ENCODE measurements at regions of chr5 and their contacts with region 1.

Region 1: DNA sequence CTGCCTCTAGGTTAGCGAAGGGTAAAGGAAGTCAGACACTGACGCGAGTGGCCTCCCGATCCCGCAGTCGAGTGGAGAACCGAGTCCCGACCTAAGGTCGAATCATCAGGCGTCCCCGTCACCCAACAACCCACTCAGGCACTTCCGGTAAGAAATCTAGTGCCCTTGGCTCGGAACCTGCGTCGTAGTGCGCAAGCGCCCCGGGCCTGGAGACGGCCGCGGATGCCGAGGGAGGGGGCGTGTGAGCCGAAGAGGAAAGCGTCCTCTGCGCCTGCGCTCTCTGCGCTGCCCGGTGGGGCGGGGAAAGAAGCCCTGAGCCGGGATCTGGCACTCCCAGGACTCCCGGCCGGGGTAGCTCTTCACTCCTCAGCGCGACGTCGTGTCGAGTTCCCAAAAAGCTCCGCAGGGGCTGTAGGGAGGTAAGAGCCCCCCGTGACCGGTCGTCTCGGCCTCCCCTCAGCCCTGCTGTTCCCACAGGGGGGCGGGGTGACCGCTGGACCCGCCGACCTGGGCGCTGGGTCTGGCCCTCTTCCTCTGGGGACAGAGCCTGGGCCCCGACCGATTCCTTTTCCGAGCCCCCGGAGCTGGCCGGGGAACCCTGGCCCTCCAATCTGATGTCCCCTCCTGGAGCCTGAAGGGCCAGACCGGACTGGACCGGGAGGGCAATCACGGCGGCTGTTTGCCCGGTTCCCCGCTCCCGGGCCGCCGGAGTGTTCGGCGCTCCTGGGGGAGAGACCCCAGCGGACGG is at the start of gene ZFYVE16:
- DNase-seq: peak; percentile 98
- ATAC-seq: peak; percentile 94
- H3K4me3 Mint-ChIP-seq: peak within 1 kb of the TSS; percentile 82
- H3K27ac Mint-ChIP-seq: peak within 1 kb of the TSS; percentile 94
- H3K4me1 Mint-ChIP-seq: peaks cover 17% of the 10 kb centered on the region
- H3K27me3 Mint-ChIP-seq: no peaks in the 10 kb centered on the region
- total RNA-seq, gene ZFYVE16: 11.2 to 11.8 TPM

Region 2: DNA sequence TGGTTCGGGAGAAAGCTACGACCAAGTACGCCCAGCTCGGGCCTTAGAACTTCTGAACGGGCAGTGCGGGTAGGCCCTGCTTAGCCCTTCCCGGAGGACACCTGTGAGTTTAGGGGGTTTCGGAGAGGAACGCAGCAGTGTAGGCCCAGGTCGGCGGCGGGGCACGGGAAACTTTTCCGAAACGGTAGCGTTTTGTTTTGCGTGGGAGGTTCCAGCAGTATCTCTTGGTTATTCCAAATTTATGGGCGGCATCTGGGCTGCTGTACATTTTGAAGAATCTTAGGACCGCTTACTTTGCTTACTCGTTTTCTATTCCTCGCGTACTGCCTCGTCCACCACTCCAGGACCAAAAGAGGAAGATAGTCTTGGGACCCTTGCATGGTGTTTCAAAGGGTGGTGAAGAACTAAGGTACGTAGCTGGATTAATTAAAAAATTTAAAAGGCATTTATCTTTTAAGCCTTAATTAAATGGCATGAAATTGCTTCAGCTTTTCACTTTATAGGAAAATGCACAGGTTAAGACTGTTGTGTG is 795.2 kb before region 1 on chr5:
- CTCF ChIA-PET with region 1: no interaction called
- POLR2A ChIA-PET with region 1: no interaction called
- intact Hi-C with region 1: loop called in 1 of 2 experiments (anchors 5 kb)
- DNase-seq: no peak
- ATAC-seq: no peak
- H3K4me3 Mint-ChIP-seq: peak overlapping the region; percentile 96
- H3K27ac Mint-ChIP-seq: peak overlapping the region; percentile 97
- H3K4me1 Mint-ChIP-seq: peaks cover 35% of the 10 kb centered on the region
- H3K27me3 Mint-ChIP-seq: no peaks in the 10 kb centered on the region

Region 3: GRCh38 chr5:80355686-80356085 is 52.2 kb before region 1 on chr5:
- CTCF ChIA-PET with region 1: no interaction called
- POLR2A ChIA-PET with region 1: no interaction called
- intact Hi-C with region 1: no loop called
- DNase-seq: no peak
- ATAC-seq: no peak
- H3K4me3 Mint-ChIP-seq: no peak overlapping the region
- H3K27ac Mint-ChIP-seq: no peak overlapping the region
- H3K4me1 Mint-ChIP-seq: no peaks in the 10 kb centered on the region
- H3K27me3 Mint-ChIP-seq: no peaks in the 10 kb centered on the region

Region 4: DNA sequence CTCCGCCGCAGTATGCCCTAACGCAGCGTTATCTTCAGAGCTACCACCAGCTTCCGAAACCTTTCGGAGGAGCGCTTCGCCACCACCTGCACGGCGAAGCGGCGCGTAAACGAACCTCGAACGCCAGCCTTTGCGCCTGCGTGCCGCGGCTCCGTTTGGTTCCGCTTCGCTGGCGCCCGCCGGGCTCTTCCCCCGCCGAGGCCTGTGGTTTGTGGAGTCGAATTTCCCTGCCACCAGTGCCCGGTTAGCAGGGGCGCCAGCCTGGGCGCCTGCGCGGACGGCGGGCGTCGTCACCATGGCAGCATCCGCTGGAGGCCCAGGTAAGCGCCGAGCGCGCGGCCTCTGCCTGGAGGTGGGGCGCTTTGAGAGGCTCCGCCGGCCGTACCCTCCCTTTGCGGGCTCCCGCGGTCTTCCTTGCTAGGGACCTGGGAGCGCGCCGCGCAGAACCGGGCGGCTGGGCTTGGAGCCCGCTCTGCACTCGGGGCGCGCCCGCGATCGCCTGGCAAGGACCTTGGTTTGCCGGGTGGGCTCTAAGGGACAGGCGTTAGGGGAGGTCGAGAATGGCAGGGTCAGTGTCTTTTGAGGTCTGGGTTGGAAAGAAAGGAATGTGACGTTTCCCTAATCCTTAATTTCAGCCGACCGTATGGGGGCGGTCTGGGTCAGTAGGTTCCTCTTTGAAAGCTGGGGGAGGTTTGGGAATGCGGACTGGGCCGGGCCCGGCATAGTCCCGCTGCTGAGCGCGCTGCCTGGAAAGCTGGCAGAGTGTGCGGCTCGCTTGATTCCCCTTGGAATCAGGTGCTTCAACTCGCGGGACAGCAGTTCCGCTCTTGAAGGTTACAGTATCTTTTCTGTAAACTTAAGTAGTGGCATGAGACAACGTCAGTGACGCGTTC is 80.2 kb after region 1 on chr5 and contains the start of gene FAM151B:
- CTCF ChIA-PET with region 1: no interaction called
- POLR2A ChIA-PET with region 1: no interaction called
- intact Hi-C with region 1: loop called in 1 of 2 experiments (anchors 2 kb)
- DNase-seq: peak; percentile 88
- ATAC-seq: peak; percentile 96
- H3K4me3 Mint-ChIP-seq: peak within 1 kb of the TSS; percentile 78
- H3K27ac Mint-ChIP-seq: peak within 1 kb of the TSS; percentile 55
- H3K4me1 Mint-ChIP-seq: peaks cover 19% of the 10 kb centered on the region
- H3K27me3 Mint-ChIP-seq: peaks cover 6% of the 10 kb centered on the region
- total RNA-seq, gene FAM151B: 0.63 to 0.75 TPM

Region 5: DNA sequence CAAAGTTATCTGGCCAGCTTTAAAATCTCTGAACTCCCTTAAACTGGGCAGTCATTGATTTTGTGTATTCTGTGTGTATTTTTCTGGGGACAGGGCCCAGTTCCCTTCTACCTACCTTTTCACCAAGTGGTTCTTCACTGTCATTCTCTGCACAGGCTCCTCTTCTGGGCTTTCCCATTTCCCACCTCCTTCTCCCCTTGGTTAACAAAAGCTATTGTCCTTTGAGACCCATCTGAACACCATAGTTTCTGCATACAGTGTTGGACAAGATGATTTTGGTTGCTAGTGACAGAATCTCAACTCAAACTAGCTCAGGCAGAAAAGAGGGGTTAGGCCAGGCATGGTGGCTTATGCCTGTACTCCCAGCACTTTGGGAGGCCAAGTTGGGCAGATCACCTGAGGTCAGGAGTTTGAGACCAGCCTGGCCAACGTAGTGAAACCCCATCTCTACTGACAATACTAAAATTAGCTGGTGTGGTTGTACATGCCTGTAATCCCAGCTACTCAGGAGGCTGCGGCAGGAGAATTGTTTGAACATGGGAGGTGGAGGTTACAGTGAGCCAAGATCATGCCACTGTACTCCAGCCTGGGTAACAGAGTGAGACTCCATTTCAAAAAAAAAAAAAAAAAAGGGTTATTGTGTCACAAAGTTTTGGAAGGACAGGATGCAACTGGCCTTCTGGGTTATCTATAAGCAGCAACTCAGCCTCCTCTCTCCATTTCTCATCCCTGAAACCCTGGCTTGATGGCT is 193.2 kb after region 1 on chr5:
- CTCF ChIA-PET with region 1: no interaction called
- POLR2A ChIA-PET with region 1: no interaction called
- intact Hi-C with region 1: no loop called
- DNase-seq: peak; percentile 12
- ATAC-seq: peak; percentile 74
- H3K4me3 Mint-ChIP-seq: no peak overlapping the region
- H3K27ac Mint-ChIP-seq: no peak overlapping the region
- H3K4me1 Mint-ChIP-seq: no peaks in the 10 kb centered on the region
- H3K27me3 Mint-ChIP-seq: no peaks in the 10 kb centered on the region

Region 6: DNA sequence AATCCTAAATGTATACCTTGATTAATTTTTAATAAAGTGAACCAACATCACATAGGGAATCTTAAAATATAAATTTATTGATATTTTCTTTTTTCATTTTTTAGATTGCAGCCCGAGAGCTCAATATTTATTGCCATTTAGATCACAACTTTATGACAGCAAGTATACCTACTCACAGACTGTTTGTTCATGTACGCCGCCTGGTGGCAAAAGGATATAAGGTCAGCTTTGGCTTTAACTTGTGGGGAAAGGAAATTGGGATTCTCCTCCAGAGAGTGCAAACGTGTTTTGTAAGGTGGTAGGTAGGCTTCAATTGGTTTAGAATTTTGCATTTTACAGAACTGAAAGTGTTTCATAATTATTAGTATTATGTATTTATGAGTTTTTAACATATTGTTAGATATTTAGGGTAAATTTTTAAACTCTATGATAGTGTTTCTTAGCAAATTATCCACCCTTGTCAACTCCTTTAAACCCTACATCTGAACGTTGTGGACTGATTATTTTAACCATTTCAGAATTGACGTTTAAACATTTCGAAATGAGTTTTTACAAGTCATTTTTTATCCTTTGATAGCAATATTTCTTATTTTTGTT is 264.3 kb after region 1 on chr5:
- CTCF ChIA-PET with region 1: no interaction called
- POLR2A ChIA-PET with region 1: no interaction called
- intact Hi-C with region 1: loop called in 1 of 2 experiments (anchors 5 kb)
- DNase-seq: peak; percentile 84
- ATAC-seq: peak; percentile 81
- H3K4me3 Mint-ChIP-seq: no peak overlapping the region
- H3K27ac Mint-ChIP-seq: no peak overlapping the region
- H3K4me1 Mint-ChIP-seq: no peaks in the 10 kb centered on the region
- H3K27me3 Mint-ChIP-seq: no peaks in the 10 kb centered on the region

Region 7: DNA sequence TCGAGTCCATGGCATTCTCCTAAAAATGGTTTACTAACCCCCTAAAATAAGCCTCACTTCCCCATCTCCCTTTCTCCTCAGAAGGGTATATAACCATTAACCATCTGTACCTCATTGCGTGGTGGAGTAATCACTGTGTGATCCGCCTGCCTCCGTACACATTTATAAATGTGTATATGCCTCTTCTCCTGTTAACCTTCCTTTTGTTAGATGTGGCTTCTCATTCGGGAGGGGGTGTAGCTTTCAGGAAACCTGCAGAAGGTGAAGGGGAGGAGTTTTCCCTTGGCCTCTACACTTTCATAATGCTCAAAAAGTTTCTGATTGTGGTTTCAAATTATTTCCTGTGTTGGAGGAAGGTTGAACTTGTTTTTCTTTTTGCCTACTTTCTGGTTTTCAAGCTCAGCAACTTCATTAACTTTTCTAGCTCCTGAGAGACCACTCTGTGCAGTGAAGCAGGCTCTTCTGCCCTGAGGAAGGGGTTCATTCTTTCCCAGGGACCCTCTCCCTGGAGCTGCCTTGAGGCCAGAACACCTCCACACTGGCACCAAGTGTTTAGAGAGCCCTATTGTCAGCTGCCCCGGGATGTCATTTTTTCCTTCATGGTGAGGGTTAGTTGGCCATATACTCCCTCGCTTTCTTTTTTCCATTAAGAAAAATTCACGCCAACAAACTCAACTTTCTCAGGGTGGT is 599.2 kb after region 1 on chr5:
- CTCF ChIA-PET with region 1: no interaction called
- POLR2A ChIA-PET with region 1: no interaction called
- intact Hi-C with region 1: loop called in 1 of 2 experiments (anchors 5 kb)
- DNase-seq: peak; percentile 71
- ATAC-seq: peak; percentile 83
- H3K4me3 Mint-ChIP-seq: peak overlapping the region; percentile 77
- H3K27ac Mint-ChIP-seq: peak overlapping the region; percentile 96
- H3K4me1 Mint-ChIP-seq: peaks cover 82% of the 10 kb centered on the region
- H3K27me3 Mint-ChIP-seq: no peaks in the 10 kb centered on the region